ENCODE measurements at regions of chr15 and their contacts with region 1.

Region 1: GRCh38 chr15:32750979-32751378 is 33.2 kb downstream of the GREM1 start:
- DNase-seq: no peak
- ATAC-seq: no peak
- H3K4me3 ChIP-seq: no peak overlapping the region
- H3K27ac ChIP-seq: no peak overlapping the region
- H3K4me1 ChIP-seq: no peaks in the 10 kb centered on the region; the same call in 1 of the 2 replicates
- H3K27me3 ChIP-seq: no peaks in the 10 kb centered on the region
- CTCF ChIP-seq: no peak
- POLR2A ChIP-seq: no peak
- RAD21 ChIP-seq: no peak

Region 2: GRCh38 chr15:32786906-32787305 is 35.9 kb after region 1 on chr15:
- CTCF ChIA-PET with region 1: no interaction called
- POLR2A ChIA-PET with region 1: no interaction called
- dilution Hi-C with region 1: no loop called
- in situ Hi-C with region 1: no loop called
- intact Hi-C with region 1: loop called (anchors 5 kb)
- DNase-seq: no peak
- ATAC-seq: no peak
- H3K4me3 ChIP-seq: no peak overlapping the region
- H3K27ac ChIP-seq: no peak overlapping the region
- H3K4me1 ChIP-seq: peaks cover 28% of the 10 kb centered on the region
- H3K27me3 ChIP-seq: no peaks in the 10 kb centered on the region
- CTCF ChIP-seq: no peak
- POLR2A ChIP-seq: no peak
- RAD21 ChIP-seq: no peak